Caco-2 (cell line): ENCODE measurements at regions of chr10 and their contacts with region 1.

Region 1: GRCh38 chr10:124418726-124419501 is at the start of gene OAT:
- DNase-seq: peak; percentile 96 to 98
- H3K4me3 ChIP-seq: peak within 1 kb of the TSS; percentile 85
- H3K4me3 Mint-ChIP-seq: peak within 1 kb of the TSS; percentile 80
- H3K27ac Mint-ChIP-seq: peak within 1 kb of the TSS; percentile 63
- H3K4me1 ChIP-seq: peaks cover 45% of the 10 kb centered on the region
- H3K4me1 Mint-ChIP-seq: peaks cover 6% of the 10 kb centered on the region
- H3K27me3 ChIP-seq: no peaks in the 10 kb centered on the region
- H3K27me3 Mint-ChIP-seq: no peaks in the 10 kb centered on the region
- CTCF ChIP-seq: peak in 1 of 2 experiments; percentile 53
- total RNA-seq, gene OAT: 312 and 316 TPM in 2 replicates

Region 2: DNA sequence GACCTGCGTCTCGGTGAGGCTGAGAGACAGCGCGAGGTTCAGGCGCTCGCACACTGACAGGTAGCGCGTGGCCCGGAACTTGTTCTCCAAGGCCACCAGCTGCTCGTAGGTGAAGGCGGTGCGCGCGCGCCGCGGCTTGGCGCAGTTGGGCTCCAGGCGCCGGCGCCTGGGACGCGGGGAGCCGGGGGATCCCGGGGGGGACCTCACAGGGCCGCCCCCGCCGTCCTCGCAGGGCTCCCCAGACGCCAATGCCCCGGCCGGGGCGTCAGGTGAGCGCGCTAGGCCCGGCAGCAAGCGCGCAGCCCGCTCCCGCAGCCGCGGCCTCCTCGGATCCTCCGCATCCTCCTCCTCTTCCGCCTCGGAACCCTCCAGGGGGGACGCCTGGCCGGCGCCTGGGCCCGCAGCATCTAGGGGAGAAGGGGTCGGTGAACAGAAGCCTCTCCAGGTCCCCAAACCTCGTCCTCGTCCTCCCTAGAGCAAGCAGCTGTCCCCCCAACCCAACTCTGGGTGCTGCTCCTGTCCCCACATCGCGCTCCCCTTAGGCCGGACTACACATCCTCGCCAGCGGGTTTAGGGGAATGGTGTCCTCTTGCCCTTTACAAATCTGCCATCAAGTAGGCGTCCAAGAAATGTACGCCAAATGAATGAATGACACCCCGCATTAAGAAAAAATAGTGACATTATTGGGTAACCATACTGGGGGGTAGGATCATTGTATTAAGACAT is 29.0 kb after region 1 on chr10:
- CTCF ChIA-PET with region 1: interaction called, 10 read pairs
- POLR2A ChIA-PET with region 1: no interaction called
- intact Hi-C with region 1: no loop called
- DNase-seq: no peak
- H3K4me3 ChIP-seq: no peak overlapping the region
- H3K4me3 Mint-ChIP-seq: peak overlapping the region; percentile 75
- H3K27ac Mint-ChIP-seq: no peak overlapping the region
- H3K4me1 ChIP-seq: peaks cover 22% of the 10 kb centered on the region
- H3K4me1 Mint-ChIP-seq: peaks cover 6% of the 10 kb centered on the region
- H3K27me3 ChIP-seq: peaks cover 2% of the 10 kb centered on the region
- H3K27me3 Mint-ChIP-seq: peaks cover 19% of the 10 kb centered on the region
- CTCF ChIP-seq: no peak

Region 3: GRCh38 chr10:124461438-124462347 is 42.8 kb after region 1 on chr10 and contains the start of gene LHPP:
- CTCF ChIA-PET with region 1: interaction called, 9 read pairs
- POLR2A ChIA-PET with region 1: interaction called, 26 read pairs
- intact Hi-C with region 1: no loop called
- DNase-seq: peak; percentile 82 to 89
- H3K4me3 ChIP-seq: peak within 1 kb of the TSS; percentile 76
- H3K4me3 Mint-ChIP-seq: peak within 1 kb of the TSS; percentile 67
- H3K27ac Mint-ChIP-seq: peak within 1 kb of the TSS; percentile 76
- H3K4me1 ChIP-seq: peaks cover 29% of the 10 kb centered on the region
- H3K4me1 Mint-ChIP-seq: peaks cover 37% of the 10 kb centered on the region
- H3K27me3 ChIP-seq: no peaks in the 10 kb centered on the region
- H3K27me3 Mint-ChIP-seq: no peaks in the 10 kb centered on the region
- CTCF ChIP-seq: peak; percentile 23 to 47
- total RNA-seq, gene LHPP: 10.5 and 15.9 TPM in 2 replicates